Endothelial cell of umbilical vein (primary cell): ENCODE measurements at regions of chr9 and their contacts with region 1.

Region 1: DNA sequence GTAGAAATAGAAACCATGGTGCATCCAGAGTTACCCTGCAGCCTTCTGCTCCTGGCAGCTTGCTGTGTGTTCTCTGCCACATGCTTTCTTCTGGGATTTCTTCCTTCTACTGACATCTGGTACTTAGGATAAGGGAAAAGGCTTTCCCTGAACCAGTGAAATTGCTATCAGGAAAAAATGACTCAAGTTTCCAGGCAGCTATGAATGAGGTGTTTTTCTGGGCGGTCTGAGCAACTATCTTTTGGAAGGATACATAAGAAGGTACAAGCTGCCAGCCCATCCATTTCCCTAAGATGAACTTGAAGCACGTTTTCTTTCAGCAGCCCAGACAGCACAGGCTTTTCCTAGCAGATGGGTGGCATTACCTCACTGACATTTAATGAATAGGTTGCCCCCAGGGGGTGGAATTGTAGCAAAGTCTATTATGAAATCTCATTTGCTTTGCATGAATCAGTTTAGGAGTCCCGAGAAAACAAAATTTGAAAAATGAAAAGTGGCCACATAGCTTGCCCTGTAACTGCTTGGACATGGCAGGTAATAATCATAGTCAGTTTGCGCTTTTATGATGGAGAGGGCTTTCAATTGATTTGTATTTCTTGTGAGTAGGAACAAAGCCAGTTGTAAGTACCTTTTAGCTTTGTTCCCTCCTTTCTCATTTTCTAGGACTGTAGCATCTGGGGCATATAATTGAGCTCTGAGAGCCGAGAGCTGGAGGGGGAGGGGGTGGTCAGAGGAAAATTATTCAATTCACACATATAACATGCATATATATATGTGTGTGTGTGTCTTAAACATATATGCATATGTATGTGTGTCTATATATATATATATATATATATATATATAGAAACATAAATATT is 108.5 kb downstream of the C9orf152 start:
- DNase-seq: peak; percentile 80
- H3K4me3 ChIP-seq: no peak overlapping the region
- H3K27ac ChIP-seq: peak overlapping the region; percentile 7
- H3K4me1 ChIP-seq: peaks cover 17% of the 10 kb centered on the region
- H3K27me3 ChIP-seq: no peaks in the 10 kb centered on the region
- CTCF ChIP-seq: no peak
- POLR2A ChIP-seq: no peak

Region 2: DNA sequence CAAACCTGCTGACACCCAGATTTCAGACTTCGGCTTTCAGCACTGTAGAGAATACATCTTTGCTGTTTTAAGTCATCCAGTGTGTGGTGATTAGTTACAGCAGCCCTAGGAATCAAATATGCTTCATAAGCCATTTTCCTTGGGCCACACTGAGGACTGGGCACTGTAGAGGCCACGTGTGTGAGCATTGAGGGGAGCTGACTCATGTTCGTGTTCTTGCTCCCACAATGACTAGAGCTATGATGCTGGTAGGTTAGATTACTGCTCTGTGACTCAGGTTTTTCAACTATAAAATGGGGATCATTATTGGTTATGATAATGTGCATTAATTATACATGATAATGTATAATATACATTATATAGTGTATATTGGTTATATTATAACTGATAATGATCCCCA is 415.9 kb before region 1 on chr9:
- CTCF ChIA-PET with region 1: no interaction called
- POLR2A ChIA-PET with region 1: no interaction called
- dilution Hi-C with region 1: no loop called
- intact Hi-C with region 1: loop called (anchors 5 kb)
- DNase-seq: no peak
- H3K4me3 ChIP-seq: no peak overlapping the region
- H3K27ac ChIP-seq: no peak overlapping the region
- H3K4me1 ChIP-seq: no peaks in the 10 kb centered on the region
- H3K27me3 ChIP-seq: no peaks in the 10 kb centered on the region
- CTCF ChIP-seq: no peak
- POLR2A ChIP-seq: no peak

Region 3: GRCh38 chr9:110056062-110056461 is 43.4 kb before region 1 on chr9:
- CTCF ChIA-PET with region 1: no interaction called
- POLR2A ChIA-PET with region 1: no interaction called
- dilution Hi-C with region 1: no loop called
- intact Hi-C with region 1: no loop called
- DNase-seq: no peak
- H3K4me3 ChIP-seq: no peak overlapping the region
- H3K27ac ChIP-seq: no peak overlapping the region
- H3K4me1 ChIP-seq: peaks cover 42% of the 10 kb centered on the region
- H3K27me3 ChIP-seq: no peaks in the 10 kb centered on the region
- CTCF ChIP-seq: no peak
- POLR2A ChIP-seq: no peak

Region 4: GRCh38 chr9:110115341-110115820 is 15.9 kb after region 1 on chr9:
- CTCF ChIA-PET with region 1: interaction called, 10 read pairs
- POLR2A ChIA-PET with region 1: no interaction called
- dilution Hi-C with region 1: no loop called
- intact Hi-C with region 1: loop called (anchors 2 kb)
- DNase-seq: peak; percentile 59
- H3K4me3 ChIP-seq: no peak overlapping the region
- H3K27ac ChIP-seq: peak overlapping the region; percentile 36
- H3K4me1 ChIP-seq: peaks cover 28% of the 10 kb centered on the region
- H3K27me3 ChIP-seq: no peaks in the 10 kb centered on the region
- CTCF ChIP-seq: no peak
- POLR2A ChIP-seq: no peak